Right cardiac atrium (tissue), 5 donors: ENCODE measurements at regions of chr10 and their contacts with region 1.

Region 1: GRCh38 chr10:125722811-125723210 is 3.3 kb downstream of the EDRF1 start:
- DNase-seq: no peak
- ATAC-seq: no peak
- H3K4me3 ChIP-seq: no peak overlapping the region
- H3K27ac ChIP-seq: no peak overlapping the region
- H3K4me1 ChIP-seq: no peaks in the 10 kb centered on the region
- H3K27me3 ChIP-seq: no peaks in the 10 kb centered on the region

Region 2: DNA sequence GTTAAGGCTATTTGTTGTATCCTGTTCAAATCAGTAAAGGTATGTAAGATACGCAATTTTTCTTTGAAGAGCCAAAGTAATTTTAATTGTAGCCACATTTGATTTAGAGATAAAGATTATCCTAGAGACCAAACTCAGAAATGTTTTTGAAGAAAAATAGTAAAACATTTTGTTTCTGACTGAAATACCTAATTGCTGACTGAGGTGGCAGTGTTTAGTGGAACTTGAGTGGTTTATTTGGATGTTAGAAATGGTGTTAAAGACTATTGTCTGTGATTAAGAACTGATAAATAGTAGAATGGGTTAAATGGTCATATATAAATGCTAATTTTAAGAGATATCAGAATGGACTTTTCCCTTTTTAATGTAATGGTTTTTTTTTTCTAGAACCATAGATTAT is 12.0 kb after region 1 on chr10:
- intact Hi-C with region 1: loop called in 1 of 4 experiments (anchors 1 kb)
- DNase-seq: no peak
- ATAC-seq: no peak
- H3K4me3 ChIP-seq: no peak overlapping the region
- H3K27ac ChIP-seq: no peak overlapping the region
- H3K4me1 ChIP-seq: peaks cover 2% of the 10 kb centered on the region
- H3K27me3 ChIP-seq: no peaks in the 10 kb centered on the region

Region 3: DNA sequence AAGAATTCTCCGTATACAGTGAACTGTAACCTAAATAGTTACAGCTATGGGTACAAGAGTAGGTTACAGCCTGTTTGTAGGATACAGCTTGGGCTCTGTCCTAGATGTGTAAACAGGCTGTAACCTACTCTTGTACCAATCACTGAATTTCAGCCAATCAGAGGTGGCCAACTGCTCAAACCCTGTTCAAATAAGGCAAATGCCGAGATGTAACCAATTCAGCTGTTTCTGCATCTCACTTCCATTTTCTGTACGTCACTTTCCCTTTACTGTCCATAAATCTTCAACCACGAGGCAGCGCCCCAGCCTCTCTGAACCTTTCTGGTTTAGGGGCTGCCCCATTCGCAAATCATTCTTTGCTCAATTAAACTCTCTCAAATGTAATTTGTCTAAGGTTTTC is 61.1 kb after region 1 on chr10:
- intact Hi-C with region 1: no loop called
- DNase-seq: no peak
- ATAC-seq: no peak
- H3K4me3 ChIP-seq: no peak overlapping the region
- H3K27ac ChIP-seq: no peak overlapping the region
- H3K4me1 ChIP-seq: no peaks in the 10 kb centered on the region
- H3K27me3 ChIP-seq: no peaks in the 10 kb centered on the region